CD4-positive, alpha-beta memory T cell (primary cell): ENCODE measurements at regions of chr11 and their contacts with region 1.

Region 1: GRCh38 chr11:47152953-47153950 is 23.4 kb downstream of the ARFGAP2 start:
- DNase-seq: peak in 4 of 5 donors; percentile 35 to 46 (median 40)
- H3K4me3 ChIP-seq: no peak overlapping the region
- H3K4me3 Mint-ChIP-seq: peak overlapping the region in 5 of 8 donors; percentile 14 to 63 (median 58)
- H3K27ac ChIP-seq: no peak overlapping the region
- H3K27ac Mint-ChIP-seq: peak overlapping the region; percentile 2 to 91 (median 65)
- H3K4me1 ChIP-seq: peaks cover 33% of the 10 kb centered on the region
- H3K4me1 Mint-ChIP-seq: peaks cover 19 to 33% (median 24%) of the 10 kb centered on the region in 4 donors
- H3K27me3 ChIP-seq: no peaks in the 10 kb centered on the region
- H3K27me3 Mint-ChIP-seq: no peaks in the 10 kb centered on the region

Region 2: DNA sequence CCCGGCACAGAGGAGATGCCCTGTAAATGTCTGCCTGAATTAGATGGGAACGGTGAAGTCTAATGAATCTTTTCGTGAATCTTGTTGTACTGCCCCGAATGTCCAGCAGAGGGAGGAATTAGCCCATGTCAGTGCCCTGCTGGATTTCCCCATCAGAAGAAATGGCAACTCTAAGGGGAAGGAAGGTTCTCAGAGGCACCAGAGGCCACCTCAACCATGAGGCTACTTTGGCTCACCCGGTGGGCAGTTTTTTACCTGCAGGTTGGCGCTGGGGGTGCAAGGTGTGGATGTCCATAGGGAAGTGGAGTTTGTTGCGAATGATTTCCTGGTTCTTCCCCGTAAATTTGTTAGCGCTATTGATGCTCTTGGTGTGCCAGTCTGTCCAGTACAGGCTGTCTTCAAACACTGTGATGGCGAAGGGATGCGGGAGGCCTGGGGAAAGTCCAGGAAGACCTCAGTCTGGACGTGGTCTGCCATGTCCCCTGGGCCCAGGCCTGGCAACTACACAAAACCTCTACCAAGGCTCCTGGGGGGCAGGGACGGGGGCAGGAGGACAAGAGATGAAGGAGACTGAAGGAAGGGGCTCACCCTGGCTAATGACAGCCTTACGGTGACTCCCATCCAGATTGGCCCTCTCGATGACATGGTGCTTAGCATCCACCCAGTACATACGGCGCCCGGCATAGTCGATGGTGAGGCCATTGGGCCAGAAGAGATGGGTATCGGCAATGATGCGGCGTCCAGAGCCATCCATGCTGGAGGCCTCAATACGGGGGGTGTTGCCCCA is 263.4 kb before region 1 on chr11:
- CTCF ChIA-PET with region 1: interaction called, 44 read pairs
- POLR2A ChIA-PET with region 1: no interaction called
- intact Hi-C with region 1: loop called (anchors 1 kb)
- DNase-seq: peak; percentile 62 to 71 (median 70)
- H3K4me3 ChIP-seq: no peak overlapping the region
- H3K4me3 Mint-ChIP-seq: no peak overlapping the region
- H3K27ac ChIP-seq: no peak overlapping the region
- H3K27ac Mint-ChIP-seq: peak overlapping the region in 1 of 7 donors; percentile 46
- H3K4me1 ChIP-seq: no peaks in the 10 kb centered on the region
- H3K4me1 Mint-ChIP-seq: peaks cover 0 to 2% (median 0%) of the 10 kb centered on the region in 4 donors
- H3K27me3 ChIP-seq: no peaks in the 10 kb centered on the region
- H3K27me3 Mint-ChIP-seq: peaks cover 3 to 7% of the 10 kb centered on the region in 2 donors

Region 3: GRCh38 chr11:46916286-46917108 is 236.8 kb before region 1 on chr11:
- CTCF ChIA-PET with region 1: interaction called, 8 read pairs
- POLR2A ChIA-PET with region 1: no interaction called
- intact Hi-C with region 1: loop called (anchors 1 kb)
- DNase-seq: peak in 1 of 5 donors; percentile 10
- H3K4me3 ChIP-seq: peak overlapping the region; percentile 14 to 56
- H3K4me3 Mint-ChIP-seq: peak overlapping the region; percentile 73 to 91 (median 82)
- H3K27ac ChIP-seq: no peak overlapping the region
- H3K27ac Mint-ChIP-seq: peak overlapping the region in 3 of 7 donors; percentile 48 to 70 (median 60)
- H3K4me1 ChIP-seq: peaks cover 25% of the 10 kb centered on the region
- H3K4me1 Mint-ChIP-seq: peaks cover 16 to 37% (median 28%) of the 10 kb centered on the region in 4 donors
- H3K27me3 ChIP-seq: peaks cover 54% of the 10 kb centered on the region
- H3K27me3 Mint-ChIP-seq: peaks cover 58 to 66% of the 10 kb centered on the region in 2 donors

Region 4: GRCh38 chr11:47020793-47021526 is 132.3 kb before region 1 on chr11:
- CTCF ChIA-PET with region 1: no interaction called
- POLR2A ChIA-PET with region 1: no interaction called
- intact Hi-C with region 1: no loop called
- DNase-seq: no peak
- H3K4me3 ChIP-seq: no peak overlapping the region
- H3K4me3 Mint-ChIP-seq: no peak overlapping the region
- H3K27ac ChIP-seq: no peak overlapping the region
- H3K27ac Mint-ChIP-seq: no peak overlapping the region
- H3K4me1 ChIP-seq: no peaks in the 10 kb centered on the region
- H3K4me1 Mint-ChIP-seq: peaks cover 0 to 2% (median under 1%) of the 10 kb centered on the region in 4 donors
- H3K27me3 ChIP-seq: no peaks in the 10 kb centered on the region
- H3K27me3 Mint-ChIP-seq: no peaks in the 10 kb centered on the region

Region 5: GRCh38 chr11:47130543-47130942 is 22.7 kb before region 1 on chr11:
- CTCF ChIA-PET with region 1: interaction called, 20 read pairs
- POLR2A ChIA-PET with region 1: no interaction called
- intact Hi-C with region 1: no loop called
- DNase-seq: no peak
- H3K4me3 ChIP-seq: no peak overlapping the region
- H3K4me3 Mint-ChIP-seq: no peak overlapping the region
- H3K27ac ChIP-seq: no peak overlapping the region
- H3K27ac Mint-ChIP-seq: no peak overlapping the region
- H3K4me1 ChIP-seq: no peaks in the 10 kb centered on the region
- H3K4me1 Mint-ChIP-seq: no peaks in the 10 kb centered on the region
- H3K27me3 ChIP-seq: no peaks in the 10 kb centered on the region
- H3K27me3 Mint-ChIP-seq: no peaks in the 10 kb centered on the region

Region 6: GRCh38 chr11:47139878-47140277 is 13.4 kb before region 1 on chr11:
- CTCF ChIA-PET with region 1: interaction called, 11 read pairs
- POLR2A ChIA-PET with region 1: no interaction called
- intact Hi-C with region 1: no loop called
- DNase-seq: no peak
- H3K4me3 ChIP-seq: no peak overlapping the region
- H3K4me3 Mint-ChIP-seq: no peak overlapping the region
- H3K27ac ChIP-seq: no peak overlapping the region
- H3K27ac Mint-ChIP-seq: no peak overlapping the region
- H3K4me1 ChIP-seq: no peaks in the 10 kb centered on the region
- H3K4me1 Mint-ChIP-seq: no peaks in the 10 kb centered on the region
- H3K27me3 ChIP-seq: no peaks in the 10 kb centered on the region
- H3K27me3 Mint-ChIP-seq: no peaks in the 10 kb centered on the region

Region 7: GRCh38 chr11:47259178-47259977 is 106.1 kb after region 1 on chr11:
- CTCF ChIA-PET with region 1: interaction called, 10 read pairs
- POLR2A ChIA-PET with region 1: no interaction called
- intact Hi-C with region 1: no loop called
- DNase-seq: peak in 1 of 5 donors; percentile 26
- H3K4me3 ChIP-seq: no peak overlapping the region
- H3K4me3 Mint-ChIP-seq: no peak overlapping the region
- H3K27ac ChIP-seq: no peak overlapping the region
- H3K27ac Mint-ChIP-seq: peak overlapping the region in 2 of 7 donors; percentile 19 to 37
- H3K4me1 ChIP-seq: peaks cover 9% of the 10 kb centered on the region
- H3K4me1 Mint-ChIP-seq: peaks cover 0 to 5% (median 4%) of the 10 kb centered on the region in 4 donors
- H3K27me3 ChIP-seq: no peaks in the 10 kb centered on the region
- H3K27me3 Mint-ChIP-seq: no peaks in the 10 kb centered on the region

Region 8: DNA sequence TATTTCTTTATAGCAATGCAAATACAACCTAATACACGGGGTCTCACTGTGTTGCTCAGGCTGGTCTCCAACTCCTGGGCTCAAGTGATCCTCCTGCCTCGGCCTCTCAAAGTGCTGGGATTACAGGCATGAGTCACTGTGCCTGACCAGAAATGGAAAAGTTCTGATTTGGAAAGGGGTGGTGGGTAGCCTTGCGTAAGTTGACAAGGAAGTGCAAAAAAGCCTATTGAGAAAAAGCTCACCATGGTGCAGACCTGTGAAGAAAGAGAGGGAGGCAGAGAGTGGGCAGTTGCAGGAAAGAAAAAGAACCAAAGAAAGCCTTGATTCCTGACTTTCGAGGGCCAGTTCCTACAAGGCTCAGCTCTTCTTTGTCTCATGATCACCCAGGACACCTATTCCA is 534.9 kb after region 1 on chr11:
- CTCF ChIA-PET with region 1: no interaction called
- POLR2A ChIA-PET with region 1: no interaction called
- intact Hi-C with region 1: no loop called
- DNase-seq: no peak
- H3K4me3 ChIP-seq: no peak overlapping the region
- H3K4me3 Mint-ChIP-seq: no peak overlapping the region
- H3K27ac ChIP-seq: no peak overlapping the region
- H3K27ac Mint-ChIP-seq: no peak overlapping the region
- H3K4me1 ChIP-seq: no peaks in the 10 kb centered on the region
- H3K4me1 Mint-ChIP-seq: peaks cover 4 to 5% (median 4%) of the 10 kb centered on the region in 4 donors
- H3K27me3 ChIP-seq: no peaks in the 10 kb centered on the region
- H3K27me3 Mint-ChIP-seq: no peaks in the 10 kb centered on the region